GM10248 (cell line): ENCODE measurements at regions of chr1 and their contacts with region 1.

Region 1: DNA sequence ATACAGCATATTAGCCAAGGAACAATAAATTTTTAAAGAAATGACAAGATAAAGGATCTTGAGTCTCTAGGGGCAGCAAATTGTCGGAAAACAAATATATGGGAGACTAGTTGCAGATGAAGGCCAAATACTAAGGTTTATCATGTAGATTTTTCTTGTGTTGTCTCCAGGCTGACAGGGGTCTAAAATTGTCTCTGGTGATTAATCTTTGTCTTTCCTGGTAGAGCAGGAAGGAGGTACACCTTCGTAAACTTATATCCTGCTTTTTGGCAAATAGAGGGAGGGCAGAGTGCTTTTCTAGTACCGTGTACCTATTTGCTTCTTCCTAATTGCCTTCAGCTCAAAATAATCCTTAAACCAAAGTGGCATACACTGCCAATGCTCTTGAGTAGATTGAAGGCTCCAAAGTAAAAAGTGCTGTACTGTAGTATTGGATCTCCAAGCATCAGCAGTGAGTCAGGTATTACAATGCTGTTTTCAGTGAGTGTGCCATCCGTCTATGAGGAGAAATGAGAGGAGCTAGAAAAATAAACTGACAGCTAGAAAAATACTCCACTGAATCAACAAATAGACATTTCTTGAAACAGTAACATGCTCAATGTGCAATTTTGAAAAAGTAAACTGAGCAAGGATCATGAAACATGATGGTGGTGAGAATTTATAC is 1.8 kb upstream of the LEPR start:
- DNase-seq: no peak
- CTCF ChIP-seq: no peak

Region 2: GRCh38 chr1:65404941-65405340 is 13.7 kb before region 1 on chr1:
- CTCF ChIA-PET with region 1: interaction called, 10 read pairs
- POLR2A ChIA-PET with region 1: no interaction called
- DNase-seq: no peak
- CTCF ChIP-seq: no peak

Region 3: DNA sequence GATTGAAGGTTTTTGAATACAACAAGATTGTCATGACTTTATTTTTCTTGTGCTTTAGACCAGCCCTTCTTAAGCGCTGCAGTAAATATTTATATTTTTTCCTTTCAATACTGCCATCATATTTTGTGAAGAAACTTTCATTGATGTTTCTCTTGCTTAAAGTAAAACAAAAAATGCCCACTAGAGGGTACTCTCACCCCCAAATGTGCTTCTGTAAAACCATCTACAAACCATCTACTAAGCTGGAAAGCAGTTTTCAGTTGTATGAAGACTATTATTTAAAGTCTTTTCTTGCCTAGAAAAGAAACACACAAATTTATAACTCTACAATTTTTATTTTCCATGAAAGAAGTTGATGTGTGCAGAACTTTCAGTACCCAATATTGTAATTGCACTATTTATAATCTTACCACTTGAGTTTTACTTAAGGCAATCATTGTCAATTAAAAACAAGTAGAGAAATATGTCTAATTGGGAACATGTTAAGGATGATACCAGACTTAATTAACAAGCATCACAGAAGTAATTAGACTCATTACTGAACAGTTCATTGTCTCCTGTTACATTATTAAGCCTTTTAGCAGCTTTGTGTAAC is 12.6 kb after region 1 on chr1:
- CTCF ChIA-PET with region 1: interaction called, 14 read pairs
- POLR2A ChIA-PET with region 1: interaction called, 3 read pairs
- DNase-seq: peak; percentile 19
- CTCF ChIP-seq: peak; percentile 31